PC-3 (cell line): ENCODE measurements at regions of chr7 and their contacts with region 1.

Region 1: DNA sequence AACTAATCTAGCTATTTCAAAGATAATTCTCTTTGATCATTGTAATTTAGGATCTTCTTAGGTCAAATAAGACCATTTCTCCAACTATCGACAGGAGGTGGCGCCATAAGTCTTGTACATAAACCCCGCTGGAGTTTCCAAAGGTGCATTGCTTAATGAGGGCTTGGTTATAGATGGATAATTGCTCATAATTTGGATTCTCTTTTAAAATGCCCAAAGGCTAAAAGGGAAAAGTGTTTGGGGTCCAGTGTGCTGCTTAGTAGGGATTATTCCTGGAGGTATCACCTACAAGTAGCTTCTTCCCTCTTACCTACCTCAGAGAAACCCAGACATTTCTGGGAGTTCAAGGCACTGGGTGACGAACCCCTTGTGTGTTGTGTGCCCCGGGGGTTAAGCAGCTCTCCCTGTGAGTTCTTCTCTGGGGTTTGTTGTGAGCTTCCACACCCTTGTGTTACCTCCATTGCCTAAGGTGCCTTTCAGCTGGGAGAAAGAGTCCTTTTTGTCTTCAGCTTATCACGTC is 75.2 kb downstream of the PAXIP1 start:
- DNase-seq: peak; percentile 83
- ATAC-seq: peak; percentile 48
- H3K4me3 ChIP-seq: peak overlapping the region; percentile 76
- H3K27ac ChIP-seq: no peak overlapping the region
- H3K4me1 ChIP-seq: peaks cover 6% of the 10 kb centered on the region
- H3K27me3 ChIP-seq: peaks cover 8% of the 10 kb centered on the region; the same call in 1 of the 2 replicates
- CTCF ChIP-seq: peak; percentile 83

Region 2: DNA sequence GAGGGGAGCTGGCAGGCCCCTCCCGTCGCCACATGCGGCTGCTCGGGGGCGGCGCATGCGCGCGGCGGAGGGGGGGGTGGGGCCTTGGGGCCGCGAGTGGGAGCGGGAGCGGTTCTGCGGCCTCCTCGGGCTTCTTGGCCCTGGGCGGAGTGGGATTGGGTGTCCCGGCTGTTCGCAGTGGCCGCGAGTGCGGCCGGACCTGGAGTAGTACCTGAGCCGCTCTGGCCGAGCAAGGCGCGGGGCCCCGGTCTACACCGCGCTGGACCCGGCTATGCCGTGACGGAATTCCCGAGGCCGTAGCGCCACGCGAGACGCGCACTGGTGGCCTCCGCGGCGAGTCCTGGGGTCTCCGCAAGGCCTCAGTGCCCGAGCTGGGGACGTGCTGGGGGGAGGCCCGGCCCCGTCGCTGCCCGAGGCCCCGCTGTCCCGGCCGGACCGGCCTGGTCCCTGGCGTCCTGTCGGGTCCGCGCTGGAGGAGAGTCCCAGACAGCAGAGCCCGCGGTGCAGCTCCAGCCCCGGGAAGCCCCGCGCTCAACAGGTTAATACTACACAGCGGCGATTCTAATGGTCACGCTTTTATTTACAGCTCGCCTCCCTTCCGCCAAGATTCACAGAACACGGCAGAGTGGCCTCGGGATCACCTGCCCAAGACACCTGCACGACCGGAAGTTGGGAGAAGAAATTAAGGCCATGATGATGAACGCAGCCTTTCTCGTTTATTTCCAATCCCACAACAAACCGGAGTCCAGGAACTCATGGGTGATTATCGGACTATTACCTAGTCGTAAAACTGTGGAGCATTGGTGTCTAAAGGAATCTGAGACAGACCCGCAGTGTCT is 75.9 kb after region 1 on chr7:
- CTCF ChIA-PET with region 1: no interaction called
- POLR2A ChIA-PET with region 1: no interaction called
- intact Hi-C with region 1: loop called (anchors 1 kb)
- DNase-seq: peak; percentile 70
- ATAC-seq: peak; percentile 65
- H3K4me3 ChIP-seq: peak overlapping the region; percentile 86
- H3K27ac ChIP-seq: peak overlapping the region; percentile 65
- H3K4me1 ChIP-seq: peaks cover 10% of the 10 kb centered on the region
- H3K27me3 ChIP-seq: no peaks in the 10 kb centered on the region
- CTCF ChIP-seq: no peak

Region 3: GRCh38 chr7:155230168-155230593 is 302.5 kb after region 1 on chr7:
- CTCF ChIA-PET with region 1: no interaction called
- POLR2A ChIA-PET with region 1: no interaction called
- intact Hi-C with region 1: loop called (anchors 5 kb)
- DNase-seq: peak; percentile 98
- ATAC-seq: peak; percentile 99
- H3K4me3 ChIP-seq: no peak overlapping the region
- H3K27ac ChIP-seq: peak overlapping the region; percentile 83
- H3K4me1 ChIP-seq: peaks cover 34% of the 10 kb centered on the region
- H3K27me3 ChIP-seq: no peaks in the 10 kb centered on the region
- CTCF ChIP-seq: no peak

Region 4: GRCh38 chr7:155298834-155299534 is 371.3 kb after region 1 on chr7:
- CTCF ChIA-PET with region 1: interaction called, 4 read pairs
- POLR2A ChIA-PET with region 1: no interaction called
- intact Hi-C with region 1: loop called (anchors 1 kb)
- DNase-seq: peak; percentile 90
- ATAC-seq: peak; percentile 77
- H3K4me3 ChIP-seq: peak overlapping the region; percentile 72
- H3K27ac ChIP-seq: peak overlapping the region; percentile 67
- H3K4me1 ChIP-seq: peaks cover 31% of the 10 kb centered on the region
- H3K27me3 ChIP-seq: no peaks in the 10 kb centered on the region
- CTCF ChIP-seq: no peak

Region 5: DNA sequence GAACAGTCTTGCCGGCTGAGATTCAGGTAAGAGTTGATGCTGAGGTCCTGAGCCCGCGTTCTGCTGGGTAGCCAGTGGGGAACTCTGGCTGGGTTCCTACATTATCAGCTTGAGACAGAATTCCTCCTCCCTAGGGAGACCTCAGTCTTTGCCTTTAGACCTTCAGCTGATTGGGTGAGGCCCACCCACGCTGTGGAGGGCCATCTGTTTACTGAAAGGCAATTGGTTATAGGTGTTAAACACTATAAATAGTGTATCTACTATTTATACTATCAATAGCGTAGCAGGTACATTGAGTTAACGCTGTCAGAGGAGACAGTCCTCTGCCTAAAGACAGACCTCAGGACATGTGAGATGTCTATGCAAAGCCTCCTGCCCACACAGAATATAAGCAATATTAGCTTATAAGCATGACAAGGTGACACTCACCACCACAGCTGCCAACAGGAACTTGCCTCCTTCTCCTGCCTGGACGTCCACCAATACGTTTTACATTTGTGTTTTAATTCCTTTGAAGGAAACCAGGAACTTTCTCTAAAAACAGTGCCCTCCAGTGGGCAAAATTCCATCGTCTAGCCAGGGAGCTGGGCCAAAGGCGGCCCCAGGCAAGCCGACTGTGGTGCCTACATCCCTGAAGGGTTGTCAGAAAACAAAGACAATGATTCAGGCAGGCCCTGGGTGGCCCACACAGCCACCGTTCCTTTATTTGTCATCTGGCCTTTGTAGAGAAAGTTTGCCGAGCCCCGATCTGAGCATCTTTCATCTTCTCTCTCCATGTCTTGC is 428.8 kb after region 1 on chr7:
- CTCF ChIA-PET with region 1: interaction called, 4 read pairs
- POLR2A ChIA-PET with region 1: no interaction called
- intact Hi-C with region 1: loop called (anchors 1 kb)
- DNase-seq: peak; percentile 61
- ATAC-seq: peak; percentile 54
- H3K4me3 ChIP-seq: no peak overlapping the region
- H3K27ac ChIP-seq: no peak overlapping the region
- H3K4me1 ChIP-seq: no peaks in the 10 kb centered on the region
- H3K27me3 ChIP-seq: peaks cover 33% of the 10 kb centered on the region
- CTCF ChIP-seq: peak; percentile 69

Region 6: DNA sequence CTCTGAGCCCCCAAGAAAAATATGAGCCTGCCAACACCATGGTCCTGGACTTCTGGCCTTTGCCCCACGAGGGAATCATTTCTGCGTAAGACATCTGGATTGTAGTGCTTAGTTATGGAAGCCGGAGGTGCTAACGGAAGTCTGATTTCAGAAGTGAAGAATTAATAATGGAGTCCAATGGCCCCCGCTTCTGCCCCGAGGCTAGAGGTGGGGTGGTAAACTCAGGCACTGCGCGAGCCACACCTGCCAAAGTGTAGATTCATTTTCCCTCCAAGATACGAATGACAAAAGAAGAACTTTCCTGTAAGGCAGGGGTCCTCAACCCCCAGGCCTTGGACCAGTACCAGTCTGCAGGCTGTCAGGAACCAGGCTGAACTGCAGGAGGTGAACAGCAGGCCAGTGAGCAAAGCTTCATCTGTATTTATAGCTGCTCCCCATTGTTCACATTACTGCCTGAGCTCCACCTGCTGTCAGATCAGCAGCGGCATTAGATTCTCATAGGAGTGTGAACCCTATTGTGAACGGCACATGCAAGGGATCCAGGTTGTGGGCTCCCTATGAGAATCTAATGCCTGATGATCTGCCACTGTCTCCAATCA is 596.4 kb after region 1 on chr7:
- CTCF ChIA-PET with region 1: no interaction called
- POLR2A ChIA-PET with region 1: no interaction called
- intact Hi-C with region 1: loop called (anchors 5 kb)
- DNase-seq: no peak
- ATAC-seq: peak; percentile 38
- H3K4me3 ChIP-seq: no peak overlapping the region
- H3K27ac ChIP-seq: no peak overlapping the region
- H3K4me1 ChIP-seq: no peaks in the 10 kb centered on the region
- H3K27me3 ChIP-seq: peaks cover 78% of the 10 kb centered on the region
- CTCF ChIP-seq: no peak

Region 7: GRCh38 chr7:155738652-155739537 is 811.2 kb after region 1 on chr7:
- CTCF ChIA-PET with region 1: no interaction called
- POLR2A ChIA-PET with region 1: no interaction called
- intact Hi-C with region 1: loop called (anchors 10 kb)
- DNase-seq: peak; percentile 74
- ATAC-seq: peak; percentile 98
- H3K4me3 ChIP-seq: no peak overlapping the region
- H3K27ac ChIP-seq: no peak overlapping the region
- H3K4me1 ChIP-seq: no peaks in the 10 kb centered on the region
- H3K27me3 ChIP-seq: no peaks in the 10 kb centered on the region
- CTCF ChIP-seq: peak; percentile 78